Activated naive CD4-positive, alpha-beta T cell treated with anti-CD3 and anti-CD28 coated beads for 36 hours (primary cell): ENCODE measurements at regions of chr22 and their contacts with region 1.

Region 1: GRCh38 chr22:49852898-49853894 is at the start of gene ZBED4:
- DNase-seq: peak; percentile 98
- H3K4me3 Mint-ChIP-seq: peak within 1 kb of the TSS; percentile 95
- H3K27ac Mint-ChIP-seq: peak within 1 kb of the TSS; percentile 81
- H3K4me1 Mint-ChIP-seq: peaks cover 42% of the 10 kb centered on the region
- H3K27me3 Mint-ChIP-seq: peaks cover 5% of the 10 kb centered on the region
- total RNA-seq, gene ZBED4: 13.0 to 13.1 TPM

Region 2: GRCh38 chr22:49400136-49400940 is 452.9 kb before region 1 on chr22:
- CTCF ChIA-PET with region 1: no interaction called
- intact Hi-C with region 1: no loop called
- DNase-seq: no peak
- H3K4me3 Mint-ChIP-seq: no peak overlapping the region
- H3K27ac Mint-ChIP-seq: no peak overlapping the region
- H3K4me1 Mint-ChIP-seq: no peaks in the 10 kb centered on the region
- H3K27me3 Mint-ChIP-seq: peaks cover 2% of the 10 kb centered on the region

Region 3: GRCh38 chr22:49632199-49633009 is 220.8 kb before region 1 on chr22:
- CTCF ChIA-PET with region 1: no interaction called
- intact Hi-C with region 1: no loop called
- DNase-seq: peak; percentile 14
- H3K4me3 Mint-ChIP-seq: no peak overlapping the region
- H3K27ac Mint-ChIP-seq: no peak overlapping the region
- H3K4me1 Mint-ChIP-seq: peaks cover 3% of the 10 kb centered on the region
- H3K27me3 Mint-ChIP-seq: no peaks in the 10 kb centered on the region

Region 4: GRCh38 chr22:49789289-49790141 is 63.7 kb before region 1 on chr22:
- CTCF ChIA-PET with region 1: interaction called, 3 read pairs
- intact Hi-C with region 1: loop called (anchors 5 kb)
- DNase-seq: peak; percentile 67
- H3K4me3 Mint-ChIP-seq: peak overlapping the region; percentile 28
- H3K27ac Mint-ChIP-seq: peak overlapping the region; percentile 70
- H3K4me1 Mint-ChIP-seq: peaks cover 40% of the 10 kb centered on the region
- H3K27me3 Mint-ChIP-seq: no peaks in the 10 kb centered on the region

Region 5: DNA sequence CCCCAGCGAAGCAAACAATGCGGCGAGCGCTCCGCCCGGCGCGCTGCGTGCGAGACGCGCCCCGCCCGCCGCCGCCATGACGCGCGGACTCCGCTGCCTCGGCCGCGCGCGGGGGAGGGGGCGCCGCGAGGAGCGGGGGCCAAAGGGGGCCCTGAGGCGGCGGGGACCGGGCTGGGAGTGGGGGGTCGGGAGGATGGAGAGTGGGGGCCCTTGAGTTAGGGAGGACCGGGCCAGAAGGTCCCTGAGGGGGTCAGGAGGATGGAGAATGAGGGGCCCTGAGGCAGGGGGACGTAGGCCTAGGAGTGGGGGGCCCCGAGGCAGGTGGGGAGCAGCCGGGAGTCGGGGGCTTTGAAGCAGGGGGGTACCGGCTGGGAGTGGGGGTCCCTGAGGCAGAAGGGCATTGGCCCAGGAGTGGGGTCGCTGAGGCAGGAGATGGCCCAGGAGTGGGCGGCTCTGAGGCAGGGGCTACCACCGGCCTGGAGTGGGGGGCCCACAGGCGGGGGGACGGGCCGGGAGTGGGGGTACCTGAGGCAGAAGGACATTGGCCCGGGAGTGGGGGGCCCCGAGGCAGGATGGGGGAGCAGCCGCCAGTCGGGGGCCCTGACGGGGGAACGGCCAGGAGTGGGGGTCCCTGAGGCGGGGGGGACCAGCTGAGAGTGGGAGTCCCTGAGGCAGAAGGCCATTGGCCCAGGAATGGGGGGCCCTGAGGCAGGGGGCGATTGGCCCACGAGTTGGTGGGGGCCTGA is 25.2 kb before region 1 on chr22 and contains the start of gene BRD1:
- CTCF ChIA-PET with region 1: no interaction called
- intact Hi-C with region 1: loop called (anchors 1 kb)
- DNase-seq: peak; percentile 35
- H3K4me3 Mint-ChIP-seq: peak within 1 kb of the TSS; percentile 85
- H3K27ac Mint-ChIP-seq: peak within 1 kb of the TSS; percentile 91
- H3K4me1 Mint-ChIP-seq: peaks cover 53% of the 10 kb centered on the region
- H3K27me3 Mint-ChIP-seq: no peaks in the 10 kb centered on the region
- total RNA-seq, gene BRD1: 26.0 to 27.0 TPM

Region 6: DNA sequence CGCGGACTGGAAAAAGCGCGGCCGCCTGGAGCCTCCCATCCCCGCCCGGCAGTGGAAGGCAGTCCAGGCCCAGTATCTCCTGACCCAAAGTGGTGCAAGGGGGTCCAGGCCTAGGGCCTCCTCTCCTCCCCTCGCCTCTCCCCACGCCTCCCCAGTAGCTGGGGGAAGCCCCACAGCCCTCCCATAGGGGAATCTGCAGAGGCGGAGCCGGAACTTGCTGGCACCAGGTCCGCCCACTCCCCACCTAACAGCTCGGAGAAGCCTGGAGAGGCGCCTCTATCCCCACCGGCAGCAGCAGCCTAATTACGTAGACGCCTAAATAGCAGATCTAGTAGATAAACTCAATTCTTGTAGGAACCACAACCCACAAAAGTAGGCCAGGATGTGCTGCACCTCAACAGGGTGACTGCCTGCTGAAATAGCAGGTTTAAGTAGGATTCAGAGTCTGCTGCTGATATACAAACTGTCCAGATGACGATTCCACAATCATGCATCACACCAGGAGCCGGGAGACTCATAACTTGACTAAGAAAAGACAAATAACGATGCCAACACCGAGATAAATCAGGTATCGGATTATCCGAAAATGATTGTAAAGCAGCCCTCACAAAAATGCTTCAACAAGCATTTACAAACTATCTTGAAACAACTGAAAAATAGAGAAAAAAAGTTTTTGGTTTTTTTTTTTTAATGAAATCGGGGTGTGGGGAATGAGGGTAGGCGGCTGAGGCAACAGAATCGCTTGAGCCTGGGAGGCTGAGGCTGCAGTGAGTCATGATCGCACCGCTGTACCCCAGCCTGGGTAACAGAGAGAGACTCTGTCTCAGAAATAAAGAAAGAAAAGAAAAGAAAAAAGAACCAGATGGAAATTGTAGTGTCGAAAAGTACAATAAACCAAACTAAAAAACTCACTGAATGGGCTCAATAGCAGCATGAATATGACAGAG is 14.2 kb before region 1 on chr22:
- CTCF ChIA-PET with region 1: interaction called, 4 read pairs
- intact Hi-C with region 1: loop called (anchors 1 kb)
- DNase-seq: peak; percentile 90
- H3K4me3 Mint-ChIP-seq: peak overlapping the region; percentile 67
- H3K27ac Mint-ChIP-seq: peak overlapping the region; percentile 85
- H3K4me1 Mint-ChIP-seq: peaks cover 31% of the 10 kb centered on the region
- H3K27me3 Mint-ChIP-seq: no peaks in the 10 kb centered on the region

Region 7: DNA sequence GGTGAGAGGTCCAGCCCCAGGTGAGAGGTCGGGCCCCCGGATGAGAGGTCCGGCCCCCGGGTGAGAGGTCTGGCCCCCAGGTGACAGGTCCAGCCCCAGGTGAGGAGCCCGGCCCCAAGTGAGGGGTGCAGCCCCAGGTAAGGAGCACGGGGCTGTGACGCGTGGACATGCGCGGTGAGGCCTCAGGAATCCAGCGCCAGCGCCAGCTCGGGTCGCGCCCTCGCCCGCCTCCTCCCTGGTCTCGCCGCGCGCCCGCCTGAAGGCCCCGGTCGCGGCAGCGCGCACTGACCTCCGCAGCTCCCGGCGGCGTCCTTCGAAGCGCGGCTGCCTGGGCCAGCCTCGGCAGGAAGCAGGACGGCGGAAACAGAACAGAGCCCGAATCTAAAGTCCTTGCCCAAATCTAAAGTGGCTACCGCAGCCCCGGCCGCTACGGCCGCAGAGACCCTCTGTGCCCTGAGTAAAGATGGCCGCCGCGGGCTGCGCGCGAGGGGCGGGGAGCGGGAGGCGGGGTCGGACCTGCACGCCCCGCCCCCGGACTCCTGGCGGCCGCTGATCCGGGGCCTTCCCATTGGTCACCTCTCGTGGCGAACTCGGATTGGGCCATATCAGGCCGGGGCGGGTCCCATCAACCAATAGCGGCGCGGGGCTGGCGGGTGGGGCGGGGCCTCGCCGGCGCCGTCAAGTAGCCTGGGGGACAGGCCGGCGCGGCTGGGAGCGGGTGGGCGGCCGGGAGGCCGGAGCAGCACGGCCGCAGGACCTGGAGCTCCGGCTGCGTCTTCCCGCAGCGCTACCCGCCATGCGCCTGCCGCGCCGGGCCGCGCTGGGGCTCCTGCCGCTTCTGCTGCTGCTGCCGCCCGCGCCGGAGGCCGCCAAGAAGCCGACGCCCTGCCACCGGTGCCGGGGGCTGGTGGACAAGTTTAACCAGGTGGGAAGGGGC is 65.0 kb after region 1 on chr22 and contains the starts of genes ALG12 and CRELD2:
- CTCF ChIA-PET with region 1: no interaction called
- intact Hi-C with region 1: loop called (anchors 1 kb)
- DNase-seq: peak; percentile 98
- H3K4me3 Mint-ChIP-seq: peak within 1 kb of the TSS; percentile 83
- H3K27ac Mint-ChIP-seq: peak within 1 kb of the TSS; percentile 80
- H3K4me1 Mint-ChIP-seq: peaks cover 23% of the 10 kb centered on the region
- H3K27me3 Mint-ChIP-seq: no peaks in the 10 kb centered on the region
- total RNA-seq, gene ALG12: 7.4 to 9.6 TPM
- total RNA-seq, gene CRELD2: 15.3 to 16.2 TPM

Region 8: DNA sequence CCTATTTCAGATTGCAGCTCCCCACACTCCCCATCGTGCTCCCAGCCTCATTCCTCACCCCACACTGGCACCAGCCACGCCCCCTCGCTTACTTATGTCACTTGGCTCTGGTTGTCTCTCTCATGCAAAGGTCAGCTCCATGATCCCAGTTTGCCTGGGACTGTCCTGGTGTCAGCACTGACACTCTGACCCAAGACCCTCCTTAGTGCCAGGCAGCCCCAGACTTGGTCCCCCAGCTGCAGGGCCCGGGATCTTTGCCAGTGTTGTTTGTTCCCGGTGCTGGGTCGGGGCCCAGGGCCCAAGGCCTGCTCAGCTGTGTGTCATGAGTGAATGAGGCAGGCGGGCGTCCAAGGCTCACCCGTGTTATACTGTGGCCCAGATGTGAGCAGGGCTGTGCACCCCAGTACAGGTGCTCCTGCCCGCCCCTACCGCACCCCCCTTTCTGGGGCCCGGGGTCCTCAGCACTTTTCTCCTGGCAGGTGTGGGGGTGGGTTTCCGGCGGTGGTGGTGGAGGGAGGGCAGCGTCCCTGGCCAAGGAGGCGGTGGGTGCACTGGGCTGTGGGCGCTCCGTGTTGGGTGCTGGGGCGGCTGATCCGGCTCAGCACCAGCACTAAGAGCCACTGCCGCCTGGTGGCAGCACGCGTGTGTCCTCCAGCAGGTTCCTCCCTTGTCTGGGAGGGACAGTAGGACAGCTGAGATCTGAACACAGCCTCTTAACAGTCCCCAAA is 139.9 kb after region 1 on chr22:
- CTCF ChIA-PET with region 1: no interaction called
- intact Hi-C with region 1: no loop called
- DNase-seq: peak; percentile 85
- H3K4me3 Mint-ChIP-seq: no peak overlapping the region
- H3K27ac Mint-ChIP-seq: peak overlapping the region; percentile 19
- H3K4me1 Mint-ChIP-seq: peaks cover 4% of the 10 kb centered on the region
- H3K27me3 Mint-ChIP-seq: no peaks in the 10 kb centered on the region